Activated CD4-positive, alpha-beta T cell treated with anti-CD3 and anti-CD28 coated beads, Interleukin-2, amount 10 ng/mL, durations not matched to agents 7 days and 5 days (primary cell): ENCODE measurements at regions of chr6 and their contacts with region 1.

Region 1: DNA sequence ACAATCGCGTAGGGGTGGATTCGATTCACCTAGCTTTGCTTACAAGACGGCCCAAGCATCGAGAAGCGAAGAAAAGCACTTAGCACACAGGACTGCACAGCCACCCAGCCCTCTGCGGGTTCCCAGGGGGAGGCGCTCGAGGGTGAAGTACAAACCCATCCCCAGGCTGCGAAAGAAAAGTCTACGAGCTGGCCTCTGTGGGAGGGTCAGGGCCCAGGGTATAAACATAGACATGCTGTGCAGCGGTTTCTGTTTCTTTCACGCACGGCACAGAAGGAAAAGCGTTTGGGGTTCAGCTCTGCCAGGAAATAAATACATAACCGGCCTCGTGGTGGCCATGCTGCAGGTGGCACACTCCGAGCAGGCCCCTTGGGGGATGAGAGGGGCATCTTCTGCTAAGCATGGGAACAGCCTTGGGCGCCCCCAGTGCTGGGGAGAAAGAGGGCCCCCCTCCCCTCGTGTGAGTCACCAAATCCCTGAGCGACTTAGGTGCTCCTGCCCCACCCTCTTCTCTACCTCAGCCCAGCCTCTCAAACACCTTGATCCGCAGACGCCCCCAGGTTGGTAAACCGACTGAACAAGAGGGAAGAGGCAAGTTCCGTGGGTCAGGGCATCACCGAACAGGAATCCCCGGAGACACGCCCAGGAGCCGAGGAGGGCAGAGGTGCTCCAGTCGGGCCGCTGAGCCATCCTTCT is 91.6 kb upstream of the RIPOR2 start:
- DNase-seq: peak; percentile 85
- H3K4me3 Mint-ChIP-seq: peak overlapping the region; percentile 60
- H3K27ac Mint-ChIP-seq: peak overlapping the region; percentile 87
- H3K4me1 Mint-ChIP-seq: peaks cover 56% of the 10 kb centered on the region
- H3K27me3 Mint-ChIP-seq: no peaks in the 10 kb centered on the region

Region 2: GRCh38 chr6:24855395-24856245 is 171.7 kb before region 1 on chr6:
- CTCF ChIA-PET with region 1: interaction called, 17 read pairs
- POLR2A ChIA-PET with region 1: no interaction called
- DNase-seq: peak; percentile 81
- H3K4me3 Mint-ChIP-seq: no peak overlapping the region
- H3K27ac Mint-ChIP-seq: peak overlapping the region; percentile 88
- H3K4me1 Mint-ChIP-seq: peaks cover 59% of the 10 kb centered on the region
- H3K27me3 Mint-ChIP-seq: no peaks in the 10 kb centered on the region

Region 3: GRCh38 chr6:25042036-25042521 is 14.7 kb after region 1 on chr6:
- CTCF ChIA-PET with region 1: interaction called, 68 read pairs
- POLR2A ChIA-PET with region 1: interaction called, 5 read pairs
- DNase-seq: peak; percentile 57
- H3K4me3 Mint-ChIP-seq: peak overlapping the region; percentile 94
- H3K27ac Mint-ChIP-seq: peak overlapping the region; percentile 95
- H3K4me1 Mint-ChIP-seq: peaks cover 58% of the 10 kb centered on the region
- H3K27me3 Mint-ChIP-seq: no peaks in the 10 kb centered on the region

Region 4: DNA sequence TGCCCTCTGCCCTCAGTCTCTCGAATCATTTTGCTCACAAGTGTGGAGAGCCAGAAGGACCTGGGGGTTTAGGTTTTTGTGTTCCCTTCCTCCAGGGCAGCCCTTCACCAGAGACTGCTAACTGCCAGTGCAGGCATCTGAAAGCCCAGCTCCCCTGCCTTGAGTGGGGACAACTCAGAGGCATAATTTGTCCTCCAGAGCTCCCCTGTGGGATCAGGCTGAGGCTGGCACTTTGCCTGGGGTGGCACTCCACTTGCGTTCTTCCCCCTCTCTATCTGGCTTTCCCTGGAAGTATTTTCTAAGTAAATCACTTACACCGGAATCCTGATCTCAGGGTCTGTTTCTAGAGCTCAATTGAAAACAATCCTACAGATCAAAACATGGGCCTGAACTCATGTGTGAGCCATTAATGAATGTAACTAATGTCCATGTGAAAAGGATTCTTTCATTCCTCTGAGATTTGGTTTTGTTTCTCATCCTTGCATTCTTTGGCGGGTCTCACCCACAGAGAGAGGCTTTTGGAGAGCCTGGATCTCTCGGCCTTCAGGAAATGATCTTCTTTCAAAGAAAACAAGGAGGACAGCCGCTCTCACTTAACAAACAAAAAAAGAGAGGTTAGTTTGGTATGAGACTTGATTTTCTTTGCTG is 34.0 kb after region 1 on chr6:
- CTCF ChIA-PET with region 1: interaction called, 31 read pairs
- POLR2A ChIA-PET with region 1: no interaction called
- DNase-seq: no peak
- H3K4me3 Mint-ChIP-seq: no peak overlapping the region
- H3K27ac Mint-ChIP-seq: no peak overlapping the region
- H3K4me1 Mint-ChIP-seq: peaks cover 22% of the 10 kb centered on the region
- H3K27me3 Mint-ChIP-seq: peaks cover 2% of the 10 kb centered on the region

Region 5: DNA sequence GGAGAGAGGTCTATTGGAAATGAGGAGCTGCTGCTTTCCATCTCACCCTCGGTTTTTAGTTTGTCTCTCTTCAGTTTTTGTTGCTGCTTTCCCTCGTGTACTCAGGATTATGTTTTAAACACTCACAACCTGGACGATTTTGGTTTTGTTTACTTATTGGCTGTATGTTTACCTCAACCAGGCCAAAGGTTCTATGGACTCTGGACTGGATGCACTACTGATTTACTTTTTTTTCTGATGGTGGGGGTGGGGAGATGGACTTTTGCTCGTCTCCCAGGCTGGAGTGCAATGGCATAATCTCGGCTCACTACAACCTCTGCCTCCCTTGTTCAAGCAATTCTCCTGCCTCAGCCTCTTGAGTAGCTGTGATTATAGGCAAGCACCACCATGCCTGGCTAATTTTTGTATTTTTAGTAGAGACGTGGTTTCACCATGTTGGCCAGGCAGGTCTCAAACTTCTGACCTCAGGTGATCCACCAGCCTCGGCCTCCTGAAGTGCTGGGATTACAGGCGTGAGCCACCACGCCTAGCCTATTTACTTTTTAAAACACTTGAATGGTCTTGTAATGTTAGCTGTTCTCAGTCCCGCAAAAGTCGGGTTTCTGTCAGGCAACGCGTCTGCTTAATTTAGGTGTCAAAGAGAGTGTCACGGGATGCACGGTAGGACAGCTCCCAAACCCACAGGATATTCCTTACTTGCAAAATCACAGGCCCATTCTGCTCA is 56.6 kb after region 1 on chr6:
- CTCF ChIA-PET with region 1: interaction called, 3 read pairs
- POLR2A ChIA-PET with region 1: interaction called, 13 read pairs
- DNase-seq: no peak
- H3K4me3 Mint-ChIP-seq: no peak overlapping the region
- H3K27ac Mint-ChIP-seq: no peak overlapping the region
- H3K4me1 Mint-ChIP-seq: peaks cover 13% of the 10 kb centered on the region
- H3K27me3 Mint-ChIP-seq: no peaks in the 10 kb centered on the region